ENCODE measurements at regions of chr21 and their contacts with region 1.

Region 1: GRCh38 chr21:44267655-44268142 is 6.0 kb upstream of the DNMT3L start:
- DNase-seq: peak; percentile 62
- ATAC-seq: peak; percentile 56
- H3K4me3 ChIP-seq: no peak overlapping the region
- H3K4me3 Mint-ChIP-seq: no peak overlapping the region
- H3K27ac ChIP-seq: no peak overlapping the region
- H3K27ac Mint-ChIP-seq: no peak overlapping the region
- H3K4me1 ChIP-seq: peaks cover 4 to 7% of the 10 kb centered on the region in 2 donors
- H3K4me1 Mint-ChIP-seq: peaks cover 4% of the 10 kb centered on the region
- H3K27me3 ChIP-seq: no peaks in the 10 kb centered on the region
- H3K27me3 Mint-ChIP-seq: no peaks in the 10 kb centered on the region
- CTCF ChIP-seq: peak; percentile 40

Region 2: DNA sequence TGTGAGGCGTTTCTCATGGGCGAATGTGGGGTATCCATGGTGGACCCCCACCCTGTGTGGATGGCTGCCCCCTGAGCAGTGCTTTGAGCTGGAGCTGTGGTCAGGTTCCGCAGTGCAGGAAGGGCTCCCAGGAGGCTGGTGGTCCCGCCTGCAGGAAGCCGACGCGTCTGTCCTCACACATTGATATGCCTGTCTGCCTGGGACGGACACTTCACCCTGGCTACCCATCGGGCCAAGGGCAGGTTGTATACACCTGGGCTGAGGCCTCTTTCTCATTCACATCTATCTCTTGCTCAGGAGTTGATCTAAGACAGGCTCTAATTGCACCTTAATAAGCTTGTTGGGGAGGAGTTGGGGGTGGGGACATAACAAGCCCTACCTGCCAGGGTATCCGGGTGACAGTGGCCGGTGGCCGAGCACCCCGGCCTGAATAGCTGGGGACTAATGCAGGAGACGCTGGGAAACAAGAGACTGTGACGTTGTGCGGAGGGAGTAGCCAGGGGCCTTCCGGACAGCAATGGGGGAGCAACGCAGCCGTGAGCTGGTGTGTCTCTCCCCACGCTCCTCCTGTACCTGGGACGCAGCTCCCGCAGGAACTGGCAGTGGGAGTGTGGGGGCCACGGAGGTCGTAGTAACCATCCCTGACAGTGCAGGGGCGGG is 527.1 kb before region 1 on chr21:
- CTCF ChIA-PET with region 1: no interaction called
- POLR2A ChIA-PET with region 1: interaction called, 11 read pairs
- intact Hi-C with region 1: no loop called
- DNase-seq: peak; percentile 66
- ATAC-seq: no peak
- H3K4me3 ChIP-seq: no peak overlapping the region
- H3K4me3 Mint-ChIP-seq: no peak overlapping the region
- H3K27ac ChIP-seq: no peak overlapping the region
- H3K27ac Mint-ChIP-seq: no peak overlapping the region
- H3K4me1 ChIP-seq: no peaks in the 10 kb centered on the region
- H3K4me1 Mint-ChIP-seq: peaks cover 5% of the 10 kb centered on the region
- H3K27me3 ChIP-seq: no peaks in the 10 kb centered on the region
- H3K27me3 Mint-ChIP-seq: no peaks in the 10 kb centered on the region
- CTCF ChIP-seq: no peak

Region 3: DNA sequence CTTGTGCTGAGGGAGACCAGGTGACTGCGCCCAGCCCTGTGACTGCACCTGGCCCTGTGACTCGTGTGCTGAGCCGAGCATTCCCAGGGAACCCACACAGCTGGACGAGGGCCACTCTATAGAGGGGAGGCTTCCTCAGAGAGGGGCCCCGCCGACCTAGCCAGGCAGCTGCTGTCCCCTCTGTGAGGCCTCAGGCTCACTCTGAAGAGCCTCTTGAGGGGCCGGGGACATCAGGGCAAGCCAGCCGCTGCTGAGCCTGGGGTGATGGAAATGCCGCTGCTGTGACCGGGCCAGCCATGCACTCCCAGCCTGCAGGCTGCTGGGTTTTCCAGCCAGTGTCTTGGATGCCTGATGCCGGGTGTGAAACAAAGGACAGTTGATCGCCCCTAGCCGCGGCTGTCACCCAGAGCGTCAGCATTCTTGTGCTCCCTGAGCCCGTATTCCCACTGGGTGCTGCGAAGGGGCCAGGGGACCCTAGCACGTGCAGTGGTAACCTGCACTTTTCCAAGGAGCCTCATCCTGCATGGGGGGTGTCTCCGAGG is 49.6 kb after region 1 on chr21:
- CTCF ChIA-PET with region 1: no interaction called
- POLR2A ChIA-PET with region 1: no interaction called
- intact Hi-C with region 1: no loop called
- DNase-seq: no peak
- ATAC-seq: no peak
- H3K4me3 ChIP-seq: no peak overlapping the region
- H3K4me3 Mint-ChIP-seq: no peak overlapping the region
- H3K27ac ChIP-seq: no peak overlapping the region
- H3K27ac Mint-ChIP-seq: no peak overlapping the region
- H3K4me1 ChIP-seq: no peaks in the 10 kb centered on the region
- H3K4me1 Mint-ChIP-seq: no peaks in the 10 kb centered on the region
- H3K27me3 ChIP-seq: no peaks in the 10 kb centered on the region
- H3K27me3 Mint-ChIP-seq: no peaks in the 10 kb centered on the region
- CTCF ChIP-seq: no peak

Region 4: DNA sequence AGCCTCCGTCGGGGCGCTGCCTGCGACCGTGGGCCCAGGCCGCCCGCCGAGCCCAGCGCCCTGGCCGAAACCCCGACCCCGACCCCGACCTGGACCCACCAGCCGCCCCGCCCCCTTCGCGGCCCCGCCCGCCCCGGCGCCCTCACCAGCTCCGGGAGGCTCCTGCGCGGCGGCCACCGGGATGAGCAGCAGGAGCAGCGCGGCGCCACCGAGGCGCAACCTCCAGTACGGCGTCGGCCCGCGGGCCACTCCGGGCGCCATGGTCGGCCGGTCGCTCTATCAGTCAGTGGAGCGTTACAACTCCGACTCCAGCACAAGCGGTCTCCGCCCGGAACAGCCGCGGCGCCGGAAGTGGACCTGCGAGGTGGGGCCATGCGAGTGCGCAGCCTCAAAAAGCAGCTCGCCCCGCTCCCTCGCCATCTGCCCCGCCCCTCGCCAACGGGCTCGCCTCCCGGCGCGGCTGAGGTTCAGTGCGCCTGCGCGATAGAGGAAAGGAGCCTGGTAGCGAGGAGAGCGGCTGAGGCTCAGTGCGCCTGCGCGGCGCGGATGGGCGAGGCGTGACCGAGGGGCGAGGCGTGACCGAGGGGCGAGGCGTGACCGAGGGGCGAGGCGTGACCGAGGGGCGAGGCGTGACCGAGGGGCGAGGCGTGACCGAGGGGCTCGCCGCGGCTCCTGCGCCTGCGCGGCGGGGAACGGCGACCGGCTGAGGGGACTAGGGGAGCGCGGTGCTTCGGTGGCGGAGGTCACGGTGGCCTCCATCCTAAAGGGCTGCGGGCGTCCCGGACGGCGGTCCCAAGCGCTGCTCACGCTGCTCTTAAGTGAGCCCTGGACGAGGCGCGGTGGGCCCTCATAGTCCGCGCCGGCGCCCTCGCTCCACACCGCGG is 605.9 kb after region 1 on chr21 and contains the start of gene PTTG1IP:
- CTCF ChIA-PET with region 1: no interaction called
- POLR2A ChIA-PET with region 1: interaction called, 11 read pairs
- intact Hi-C with region 1: no loop called
- DNase-seq: peak; percentile 99
- ATAC-seq: peak; percentile 83
- H3K4me3 ChIP-seq: peak within 1 kb of the TSS; percentile 73 to 92 (median 81)
- H3K4me3 Mint-ChIP-seq: peak within 1 kb of the TSS; percentile 92
- H3K27ac ChIP-seq: peak within 1 kb of the TSS; percentile 80 to 93
- H3K27ac Mint-ChIP-seq: peak within 1 kb of the TSS; percentile 98
- H3K4me1 ChIP-seq: peaks cover 50 to 56% of the 10 kb centered on the region in 2 donors
- H3K4me1 Mint-ChIP-seq: peaks cover 60% of the 10 kb centered on the region
- H3K27me3 ChIP-seq: no peaks in the 10 kb centered on the region
- H3K27me3 Mint-ChIP-seq: no peaks in the 10 kb centered on the region
- CTCF ChIP-seq: no peak
- total RNA-seq, gene PTTG1IP: 58.6 and 62.9 TPM in 2 replicates